Right ventricle myocardium inferior (tissue), 1 donor: ENCODE measurements at regions of chr13 and their contacts with region 1.

Region 1: DNA sequence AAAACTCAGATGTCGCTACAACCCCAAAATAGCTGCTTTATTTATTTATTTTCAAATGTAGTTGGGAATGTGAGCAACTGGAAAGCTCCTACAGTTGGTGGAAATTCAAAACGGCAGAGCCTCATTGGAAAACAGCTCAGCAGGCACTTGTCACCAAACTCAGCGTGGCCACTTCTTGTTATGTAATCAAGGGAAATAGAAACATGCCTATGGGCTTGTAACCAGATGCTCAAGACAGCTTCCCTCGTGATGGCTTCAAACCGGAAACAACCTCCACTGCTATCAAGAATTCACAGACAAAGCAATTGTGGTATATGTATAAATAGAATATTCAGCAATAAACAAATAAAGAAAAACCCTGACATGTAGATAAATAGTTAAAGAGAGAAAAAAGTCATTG is 627.8 kb upstream of the SLC10A2 start:
- DNase-seq: no peak
- ATAC-seq: no peak

Region 2: GRCh38 chr13:103663996-103664395 is 30.0 kb before region 1 on chr13:
- intact Hi-C with region 1: loop called (anchors 2 kb)
- DNase-seq: no peak
- ATAC-seq: no peak

Region 3: GRCh38 chr13:103762523-103762922 is 68.5 kb after region 1 on chr13:
- intact Hi-C with region 1: no loop called
- DNase-seq: no peak
- ATAC-seq: no peak